Panc1 (cell line): ENCODE measurements at regions of chr22 and their contacts with region 1.

Region 1: DNA sequence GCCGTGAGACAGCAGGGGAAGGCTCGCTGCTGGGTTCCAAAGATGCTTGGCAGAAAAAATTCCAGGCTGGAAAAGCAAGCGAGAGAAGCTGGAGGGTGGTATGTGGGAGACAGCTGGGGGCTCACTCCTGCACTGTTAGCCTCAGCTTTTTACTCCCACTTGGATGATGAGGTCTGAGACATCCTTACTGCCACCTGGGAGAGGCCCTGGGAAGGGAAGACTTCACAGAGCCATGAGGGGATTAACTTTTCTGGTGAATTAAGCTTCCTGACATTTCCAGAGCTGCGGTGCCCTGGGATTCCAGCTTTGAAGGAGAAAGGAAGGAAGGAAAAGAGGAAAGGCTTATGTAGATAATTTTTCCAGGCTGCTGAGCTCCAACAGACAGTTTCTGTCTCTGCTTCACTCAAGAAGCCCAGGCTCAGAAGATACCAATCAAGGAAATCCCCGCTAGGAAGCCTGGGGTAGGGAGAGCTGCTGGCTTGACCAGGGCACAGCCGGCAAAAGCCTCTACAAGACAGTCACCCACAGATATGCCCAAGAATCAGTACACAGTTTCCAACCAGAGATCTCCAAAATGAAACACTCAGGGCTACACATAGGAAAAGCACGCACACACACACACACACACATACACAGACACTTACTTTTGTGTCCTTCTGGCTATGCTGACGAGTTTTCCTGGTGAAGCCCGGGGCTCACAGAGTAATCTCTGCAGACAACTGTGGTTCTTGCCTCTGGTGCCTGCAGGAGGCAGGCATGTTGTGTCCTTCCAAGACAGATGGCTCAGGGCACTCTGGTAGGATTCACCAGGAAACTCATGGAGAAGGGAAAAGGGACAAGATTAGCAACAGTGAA is 907 bp downstream of the MCHR1 start:
- DNase-seq: no peak
- ATAC-seq: no peak
- H3K4me3 ChIP-seq: no peak overlapping the region
- H3K27ac ChIP-seq: peak overlapping the region; percentile 18; the same call in 1 of the 2 replicates
- H3K4me1 ChIP-seq: peaks cover 21% of the 10 kb centered on the region
- H3K27me3 ChIP-seq: no peaks in the 10 kb centered on the region
- CTCF ChIP-seq: no peak; the same call in 1 of the 2 replicates

Region 2: DNA sequence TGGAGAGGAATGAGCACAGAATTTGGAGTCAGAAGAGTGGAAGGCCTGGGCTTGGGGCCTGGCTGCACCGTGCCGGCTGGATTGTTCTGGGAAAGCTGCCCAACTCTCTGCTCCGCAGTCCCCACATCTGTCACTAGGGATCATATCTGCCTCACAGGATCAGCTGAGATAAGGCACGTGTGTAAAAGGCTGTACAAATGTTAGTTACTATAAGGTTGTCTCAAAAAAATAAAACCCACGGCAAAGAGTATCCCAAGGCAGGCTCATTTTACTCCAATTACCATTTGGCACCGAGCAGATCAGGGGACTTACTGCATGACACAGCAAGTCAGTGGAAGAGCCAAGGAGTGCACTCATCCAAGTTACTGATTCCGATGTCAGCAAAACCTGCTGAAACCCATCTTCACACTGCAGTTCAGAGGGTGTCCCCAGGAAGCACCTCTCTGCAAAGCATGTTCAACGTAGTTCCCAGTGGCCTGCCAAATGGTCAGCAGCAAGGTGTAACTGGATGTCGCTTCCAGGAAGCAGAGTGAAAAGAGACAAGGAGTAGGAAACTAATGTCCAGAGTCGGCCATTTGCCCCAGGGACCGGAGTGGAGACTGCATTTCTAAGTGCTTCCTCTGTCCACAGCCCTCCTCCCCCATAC is 25.5 kb before region 1 on chr22:
- CTCF ChIA-PET with region 1: interaction called, 11 read pairs
- POLR2A ChIA-PET with region 1: interaction called, 3 read pairs
- in situ Hi-C with region 1: no loop called
- intact Hi-C with region 1: no loop called
- DNase-seq: no peak
- ATAC-seq: peak; percentile 40; the same call in 1 of the 2 replicates
- H3K4me3 ChIP-seq: no peak overlapping the region
- H3K27ac ChIP-seq: peak overlapping the region; percentile 68
- H3K4me1 ChIP-seq: peaks cover 25% of the 10 kb centered on the region
- H3K27me3 ChIP-seq: no peaks in the 10 kb centered on the region
- CTCF ChIP-seq: no peak

Region 3: DNA sequence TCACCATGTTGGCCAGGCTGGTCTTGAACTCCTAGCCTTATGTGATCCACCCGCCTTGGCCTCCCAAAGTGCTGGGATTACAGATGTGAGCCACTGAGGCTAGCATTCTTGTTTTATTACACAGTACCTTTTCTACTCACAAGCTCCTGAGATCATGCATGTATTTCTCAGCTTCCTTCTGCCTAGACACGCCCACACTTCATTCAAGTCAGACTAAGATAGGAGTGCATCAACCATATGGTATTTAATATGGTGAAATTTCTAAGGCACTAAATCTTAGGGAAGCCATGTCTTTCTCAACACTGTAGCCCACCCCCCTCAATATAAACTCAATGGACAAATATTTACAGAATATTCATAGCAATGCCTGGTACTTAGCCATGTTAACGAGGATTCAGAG is 76.9 kb after region 1 on chr22:
- CTCF ChIA-PET with region 1: interaction called, 15 read pairs
- POLR2A ChIA-PET with region 1: interaction called, 7 read pairs
- in situ Hi-C with region 1: no loop called
- intact Hi-C with region 1: loop called (anchors 5 kb)
- DNase-seq: no peak
- ATAC-seq: no peak
- H3K4me3 ChIP-seq: no peak overlapping the region
- H3K27ac ChIP-seq: peak overlapping the region; percentile 80
- H3K4me1 ChIP-seq: peaks cover 27% of the 10 kb centered on the region
- H3K27me3 ChIP-seq: no peaks in the 10 kb centered on the region
- CTCF ChIP-seq: no peak